ENCODE measurements at regions of chr19 and their contacts with region 1.

Region 1: DNA sequence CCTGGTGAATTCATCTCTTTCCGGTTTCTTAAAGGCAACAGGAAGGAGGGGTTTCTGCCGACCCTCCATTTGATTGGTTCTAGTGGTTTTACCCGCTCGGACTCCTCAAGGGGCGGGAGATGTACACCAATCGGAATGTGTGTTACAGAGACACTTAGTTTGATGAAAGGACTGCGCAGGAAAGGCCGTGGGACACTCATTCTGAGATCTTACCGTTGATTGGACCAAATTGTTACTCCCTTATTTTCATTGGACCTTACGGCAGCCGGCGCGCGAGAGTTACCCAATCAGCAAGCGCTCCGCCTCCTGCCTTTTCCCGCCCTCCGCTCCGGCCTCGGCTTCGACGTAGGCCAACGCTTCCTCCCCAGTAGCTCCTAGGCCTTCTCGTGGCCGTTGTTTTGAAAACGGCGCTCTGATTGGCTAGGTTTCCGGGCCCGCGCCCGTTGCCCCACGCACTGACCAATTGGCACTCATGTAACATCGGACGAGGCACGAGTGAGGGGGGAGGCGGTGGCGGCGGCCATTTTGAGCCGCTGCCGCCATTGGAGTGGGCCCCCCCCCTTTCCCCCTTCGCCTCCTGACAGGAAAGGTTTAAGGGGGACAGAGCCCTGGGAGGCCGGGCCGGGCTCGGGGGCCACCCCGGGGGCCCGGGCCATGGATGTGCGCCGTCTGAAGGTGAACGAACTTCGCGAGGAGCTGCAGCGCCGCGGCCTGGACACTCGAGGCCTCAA is at the start of gene HNRNPUL1:
- DNase-seq: peak; percentile 99
- H3K4me3 Mint-ChIP-seq: peak within 1 kb of the TSS; percentile 99
- H3K27ac Mint-ChIP-seq: peak within 1 kb of the TSS; percentile 100
- H3K4me1 Mint-ChIP-seq: peaks cover 32% of the 10 kb centered on the region
- H3K27me3 Mint-ChIP-seq: peaks cover 2% of the 10 kb centered on the region
- total RNA-seq, gene HNRNPUL1: 283 and 294 TPM in 2 replicates

Region 2: DNA sequence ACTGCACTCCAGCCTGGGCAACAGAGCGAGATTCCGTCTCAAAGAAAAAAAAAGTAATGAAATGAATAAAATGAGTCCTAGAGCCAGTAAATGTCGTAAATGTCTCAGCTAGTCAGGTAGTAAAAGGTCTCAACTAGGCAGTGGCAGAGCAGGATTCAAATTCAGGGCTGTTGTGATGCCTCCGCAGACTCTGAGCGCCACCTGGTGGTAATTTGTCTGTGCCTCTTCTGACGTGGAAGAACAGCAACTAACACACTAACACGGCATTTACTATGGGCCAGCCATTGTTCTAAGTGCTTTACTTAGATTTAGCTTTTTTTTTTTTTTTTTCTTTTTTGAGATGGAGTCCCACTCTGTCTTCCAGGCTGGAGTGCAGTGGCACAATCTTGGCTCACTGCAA is 119.6 kb before region 1 on chr19:
- intact Hi-C with region 1: loop called (anchors 1 kb)
- DNase-seq: peak; percentile 75
- H3K4me3 Mint-ChIP-seq: no peak overlapping the region
- H3K27ac Mint-ChIP-seq: no peak overlapping the region
- H3K4me1 Mint-ChIP-seq: no peaks in the 10 kb centered on the region
- H3K27me3 Mint-ChIP-seq: peaks cover 9% of the 10 kb centered on the region

Region 3: DNA sequence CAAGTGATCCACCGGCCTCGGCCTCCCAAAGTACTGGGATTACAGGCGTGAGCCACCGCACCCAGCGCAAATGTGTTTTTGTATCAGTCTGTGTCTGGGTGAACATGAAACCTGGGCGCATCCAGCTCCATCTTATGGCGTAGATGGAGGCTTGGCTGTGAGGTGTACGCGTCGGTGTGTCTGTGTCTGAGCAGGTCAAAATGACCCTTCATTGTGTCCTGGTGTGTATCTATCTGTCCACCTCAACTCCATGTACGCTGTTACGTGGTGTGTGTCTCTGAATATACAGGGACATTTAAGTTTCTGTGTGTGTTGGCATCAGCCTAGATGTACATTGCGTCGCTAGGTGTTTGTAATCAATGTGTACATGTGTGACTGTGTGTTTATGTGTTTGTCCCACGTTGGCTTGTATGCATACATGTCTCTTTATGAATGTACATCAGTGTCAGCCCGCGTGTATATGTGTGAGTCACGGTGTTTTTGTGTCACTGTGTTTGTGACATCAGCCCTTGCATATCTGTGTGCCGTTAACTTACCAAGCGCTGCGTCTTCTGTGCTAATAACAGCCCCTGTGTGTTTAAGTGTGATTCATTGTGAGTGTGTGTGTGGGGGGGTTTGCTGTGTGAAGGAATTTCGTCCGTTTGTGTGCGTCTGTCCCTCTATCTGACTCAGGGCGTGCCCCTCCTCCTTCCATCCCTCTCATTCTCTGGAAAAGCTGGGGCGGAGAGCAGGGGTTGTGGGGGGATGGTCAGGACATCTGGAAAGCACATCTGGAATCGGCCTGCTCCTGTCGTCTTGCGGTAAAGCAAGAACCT is 38.6 kb before region 1 on chr19:
- intact Hi-C with region 1: loop called (anchors 1 kb)
- DNase-seq: no peak
- H3K4me3 Mint-ChIP-seq: peak overlapping the region; percentile 67
- H3K27ac Mint-ChIP-seq: peak overlapping the region; percentile 86
- H3K4me1 Mint-ChIP-seq: peaks cover 24% of the 10 kb centered on the region
- H3K27me3 Mint-ChIP-seq: peaks cover 17% of the 10 kb centered on the region

Region 4: DNA sequence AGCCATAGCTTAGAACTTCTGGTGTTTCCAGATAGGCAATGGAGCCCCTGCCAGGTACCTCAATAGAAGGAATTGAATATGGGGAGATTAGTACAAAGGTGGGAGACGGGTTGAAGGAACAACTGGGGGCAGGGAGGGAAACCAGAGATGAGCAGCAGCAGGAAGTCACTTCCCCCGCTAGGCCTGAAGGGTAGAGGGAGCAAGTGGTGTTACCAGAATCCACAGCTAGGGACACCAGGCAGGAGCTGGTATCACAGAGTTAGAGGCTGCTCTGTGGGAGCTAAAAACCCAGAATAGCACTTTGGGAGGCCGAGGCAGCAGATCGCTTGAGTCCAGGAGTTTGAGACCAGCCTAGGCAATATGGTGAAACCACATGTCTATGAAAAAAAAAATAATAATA is 15.1 kb before region 1 on chr19:
- intact Hi-C with region 1: no loop called
- DNase-seq: no peak
- H3K4me3 Mint-ChIP-seq: no peak overlapping the region
- H3K27ac Mint-ChIP-seq: no peak overlapping the region
- H3K4me1 Mint-ChIP-seq: no peaks in the 10 kb centered on the region
- H3K27me3 Mint-ChIP-seq: peaks cover 7% of the 10 kb centered on the region

Region 5: DNA sequence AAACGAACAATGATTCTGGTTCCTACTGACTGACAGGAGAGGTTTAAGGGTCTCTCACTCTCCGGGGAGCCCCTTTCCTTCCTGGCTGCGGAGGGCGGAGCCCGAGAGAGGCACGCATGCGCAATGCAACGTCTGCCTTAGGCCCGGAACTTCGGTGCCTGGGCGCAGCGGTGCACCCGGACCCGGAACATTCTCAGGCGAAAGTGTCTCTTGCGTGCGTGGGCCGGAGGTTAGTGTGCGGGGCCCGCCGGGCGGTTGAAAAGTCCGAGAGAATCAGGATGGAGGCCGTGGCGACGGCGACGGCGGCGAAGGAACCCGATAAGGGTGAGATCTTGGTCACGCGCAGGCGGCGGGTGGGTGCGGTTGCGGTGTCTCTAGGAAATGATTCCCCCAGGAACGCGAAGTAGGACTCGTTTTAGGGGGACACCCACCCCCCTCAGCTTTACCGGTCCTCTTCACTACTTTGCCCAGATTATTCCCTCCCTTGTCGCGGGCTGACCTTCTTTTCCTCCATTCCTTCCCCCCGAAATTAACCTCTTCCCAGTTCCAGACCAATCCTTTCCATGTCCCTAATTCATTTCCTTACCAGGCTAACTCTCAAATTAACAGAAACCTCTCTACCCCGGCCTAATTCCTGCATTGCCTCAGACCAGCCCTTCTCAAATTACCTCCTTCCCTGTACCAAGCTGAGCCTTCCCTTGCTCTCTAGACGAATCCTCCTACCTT is 46.2 kb after region 1 on chr19 and contains the start of gene CCDC97:
- intact Hi-C with region 1: loop called (anchors 1 kb)
- DNase-seq: peak; percentile 88
- H3K4me3 Mint-ChIP-seq: peak within 1 kb of the TSS; percentile 97
- H3K27ac Mint-ChIP-seq: peak within 1 kb of the TSS; percentile 96
- H3K4me1 Mint-ChIP-seq: peaks cover 51% of the 10 kb centered on the region
- H3K27me3 Mint-ChIP-seq: no peaks in the 10 kb centered on the region
- total RNA-seq, gene CCDC97: 33.5 and 34.4 TPM in 2 replicates

Region 6: GRCh38 chr19:41397086-41398049 is 133.4 kb after region 1 on chr19 and contains the starts of genes BCKDHA and EXOSC5:
- intact Hi-C with region 1: loop called (anchors 1 kb)
- DNase-seq: peak; percentile 99
- H3K4me3 Mint-ChIP-seq: peak within 1 kb of the TSS; percentile 95
- H3K27ac Mint-ChIP-seq: peak within 1 kb of the TSS; percentile 99
- H3K4me1 Mint-ChIP-seq: peaks cover 26% of the 10 kb centered on the region
- H3K27me3 Mint-ChIP-seq: no peaks in the 10 kb centered on the region
- total RNA-seq, gene BCKDHA: 18.9 and 20.5 TPM in 2 replicates
- total RNA-seq, gene EXOSC5: 50.4 and 54.3 TPM in 2 replicates

Region 7: DNA sequence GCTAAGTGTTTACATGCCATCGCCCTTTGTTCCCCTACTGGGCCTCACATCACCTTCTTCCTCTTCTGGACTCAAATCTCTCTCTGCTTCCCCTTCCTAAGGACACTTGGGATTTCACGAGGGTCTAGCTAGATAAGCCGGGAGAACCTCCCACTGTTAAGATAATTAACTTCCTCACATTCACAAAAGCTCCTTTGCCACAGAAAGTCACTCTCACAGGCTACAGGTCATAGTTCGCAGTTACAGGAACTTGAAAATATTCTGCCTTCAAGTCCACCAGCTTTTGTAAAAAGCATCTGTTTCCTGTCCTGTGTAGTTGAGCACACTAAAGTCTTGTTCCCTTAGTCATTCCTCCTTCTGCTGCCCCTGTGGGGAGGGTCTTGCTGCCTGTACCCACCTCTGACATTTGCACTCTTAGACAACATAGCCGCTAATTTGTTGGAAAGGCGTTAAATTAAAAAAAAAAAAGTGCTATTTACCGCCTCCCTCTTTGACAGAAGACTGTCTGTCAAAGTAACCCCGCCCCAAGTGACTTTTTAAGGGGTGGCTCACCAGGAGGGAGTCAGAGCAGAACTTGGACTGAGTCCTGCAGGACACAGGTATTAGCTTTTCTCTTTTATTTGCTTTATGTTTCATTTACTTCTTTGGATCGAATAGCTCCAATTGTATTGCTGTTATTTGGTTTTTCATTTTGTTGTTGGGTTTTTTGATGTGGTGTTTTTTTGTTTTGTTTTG is 285.1 kb after region 1 on chr19:
- intact Hi-C with region 1: loop called (anchors 5 kb)
- DNase-seq: peak; percentile 78
- H3K4me3 Mint-ChIP-seq: peak overlapping the region; percentile 89
- H3K27ac Mint-ChIP-seq: peak overlapping the region; percentile 95
- H3K4me1 Mint-ChIP-seq: peaks cover 68% of the 10 kb centered on the region
- H3K27me3 Mint-ChIP-seq: no peaks in the 10 kb centered on the region